CD8-positive, alpha-beta T cell (primary cell): ENCODE measurements at regions of chr3 and their contacts with region 1.

Region 1: DNA sequence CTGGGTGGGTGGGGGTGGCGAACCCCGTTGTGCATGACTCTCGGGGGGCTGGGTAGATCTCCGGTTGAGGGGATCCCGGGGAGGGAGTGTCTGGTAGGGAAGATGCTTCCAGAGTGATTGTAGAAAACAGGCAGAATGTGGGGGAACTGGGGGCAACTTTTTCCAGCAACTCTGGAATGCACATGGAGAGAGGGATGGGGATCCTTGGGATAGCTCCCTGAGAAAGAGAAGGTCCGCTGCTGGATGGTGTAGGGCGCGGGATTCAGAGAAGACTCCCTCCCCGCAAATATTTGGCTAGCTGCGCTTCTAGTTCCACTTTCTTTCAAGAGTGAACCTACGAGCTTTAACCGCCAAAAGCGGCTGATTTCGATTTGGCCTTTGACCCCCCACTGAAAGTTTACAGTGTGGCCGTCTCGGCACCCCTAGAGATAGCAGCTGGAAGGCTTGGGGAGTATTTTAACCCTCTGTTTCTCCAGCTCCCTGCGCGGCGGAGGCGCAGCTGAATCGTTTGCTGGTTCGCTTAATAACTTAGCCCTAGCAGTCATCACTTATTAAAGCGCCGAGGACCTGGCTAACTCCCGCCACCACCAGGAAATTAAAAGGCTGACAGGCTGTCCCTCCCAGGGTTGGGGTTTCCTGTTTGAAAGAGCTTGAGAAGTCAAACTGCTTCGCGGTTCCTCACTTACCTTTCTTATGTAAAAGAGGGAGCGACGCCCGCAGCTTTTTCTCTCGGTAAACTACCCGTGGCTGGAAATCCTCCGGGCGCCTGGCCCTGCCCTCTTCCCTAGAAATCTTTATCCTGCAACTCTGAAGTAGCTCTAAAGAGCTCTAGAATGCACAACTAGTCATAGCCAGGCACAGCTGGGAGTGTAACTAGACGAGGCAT is 1.2 kb downstream of the PHLDB2 start:
- DNase-seq: peak; percentile 10 to 86 (median 48)
- ATAC-seq: peak; percentile 39
- H3K4me3 ChIP-seq: peak overlapping the region; percentile 75 to 83
- H3K4me3 Mint-ChIP-seq: peak overlapping the region; percentile 95
- H3K27ac ChIP-seq: peak overlapping the region; percentile 40 to 76
- H3K27ac Mint-ChIP-seq: peak overlapping the region; percentile 85
- H3K4me1 ChIP-seq: peaks cover 8% of the 10 kb centered on the region
- H3K4me1 Mint-ChIP-seq: peaks cover 18% of the 10 kb centered on the region
- H3K27me3 ChIP-seq: no peaks in the 10 kb centered on the region
- H3K27me3 Mint-ChIP-seq: peaks cover 17% of the 10 kb centered on the region
- CTCF ChIP-seq: no peak

Region 2: GRCh38 chr3:111676211-111677006 is 183.8 kb before region 1 on chr3:
- CTCF ChIA-PET with region 1: no interaction called
- POLR2A ChIA-PET with region 1: no interaction called
- intact Hi-C with region 1: loop called in 1 of 2 experiments (anchors 5 kb)
- DNase-seq: peak in 2 of 9 experiments; percentile 27 to 46
- ATAC-seq: no peak
- H3K4me3 ChIP-seq: peak overlapping the region; percentile 66 to 79
- H3K4me3 Mint-ChIP-seq: peak overlapping the region; percentile 96
- H3K27ac ChIP-seq: peak overlapping the region; percentile 1 to 85
- H3K27ac Mint-ChIP-seq: peak overlapping the region; percentile 99
- H3K4me1 ChIP-seq: peaks cover 68% of the 10 kb centered on the region
- H3K4me1 Mint-ChIP-seq: peaks cover 85% of the 10 kb centered on the region
- H3K27me3 ChIP-seq: no peaks in the 10 kb centered on the region
- H3K27me3 Mint-ChIP-seq: no peaks in the 10 kb centered on the region
- CTCF ChIP-seq: no peak

Region 3: GRCh38 chr3:111901637-111902036 is 41.4 kb after region 1 on chr3:
- CTCF ChIA-PET with region 1: no interaction called
- POLR2A ChIA-PET with region 1: no interaction called
- intact Hi-C with region 1: loop called in 1 of 2 experiments (anchors 1 kb)
- DNase-seq: no peak
- ATAC-seq: no peak
- H3K4me3 ChIP-seq: no peak overlapping the region
- H3K4me3 Mint-ChIP-seq: no peak overlapping the region
- H3K27ac ChIP-seq: no peak overlapping the region
- H3K27ac Mint-ChIP-seq: no peak overlapping the region
- H3K4me1 ChIP-seq: no peaks in the 10 kb centered on the region
- H3K4me1 Mint-ChIP-seq: no peaks in the 10 kb centered on the region
- H3K27me3 ChIP-seq: no peaks in the 10 kb centered on the region
- H3K27me3 Mint-ChIP-seq: no peaks in the 10 kb centered on the region
- CTCF ChIP-seq: no peak